ENCODE measurements at regions of chr5 and their contacts with region 1.

Region 1: DNA sequence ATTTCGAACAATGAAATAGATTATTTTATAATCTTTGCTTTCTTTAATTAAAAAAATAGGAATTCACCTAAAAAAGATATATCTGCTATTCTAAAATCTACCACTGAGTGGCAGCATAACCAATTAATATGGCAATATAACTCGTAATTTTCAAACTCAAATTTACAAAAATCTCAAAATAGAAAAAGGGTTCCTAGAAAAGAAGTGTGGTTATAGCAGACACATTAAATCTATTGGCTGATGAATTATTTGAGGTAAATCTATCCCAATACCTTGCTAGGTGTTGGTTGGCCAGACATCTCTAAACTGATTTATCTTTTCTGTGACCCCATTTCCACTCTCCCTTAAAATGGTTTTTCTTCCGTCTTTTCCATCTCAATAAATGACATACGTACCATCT is 30.2 kb upstream of the NRG2 start:
- DNase-seq: no peak
- H3K4me3 ChIP-seq: no peak overlapping the region
- H3K27ac ChIP-seq: no peak overlapping the region
- H3K27me3 ChIP-seq: peaks cover 10% of the 10 kb centered on the region
- CTCF ChIP-seq: peak; percentile 49

Region 2: GRCh38 chr5:140108084-140109017 is 35.1 kb after region 1 on chr5:
- CTCF ChIA-PET with region 1: interaction called, 18 read pairs
- POLR2A ChIA-PET with region 1: no interaction called
- DNase-seq: no peak
- H3K4me3 ChIP-seq: peak overlapping the region; percentile 79
- H3K27ac ChIP-seq: no peak overlapping the region
- H3K27me3 ChIP-seq: peaks cover 14% of the 10 kb centered on the region
- CTCF ChIP-seq: no peak

Region 3: GRCh38 chr5:140157032-140157803 is 83.9 kb after region 1 on chr5:
- CTCF ChIA-PET with region 1: interaction called, 101 read pairs
- POLR2A ChIA-PET with region 1: no interaction called
- DNase-seq: no peak
- H3K4me3 ChIP-seq: peak overlapping the region; percentile 34
- H3K27ac ChIP-seq: no peak overlapping the region
- H3K27me3 ChIP-seq: peaks cover 8% of the 10 kb centered on the region
- CTCF ChIP-seq: peak; percentile 94

Region 4: DNA sequence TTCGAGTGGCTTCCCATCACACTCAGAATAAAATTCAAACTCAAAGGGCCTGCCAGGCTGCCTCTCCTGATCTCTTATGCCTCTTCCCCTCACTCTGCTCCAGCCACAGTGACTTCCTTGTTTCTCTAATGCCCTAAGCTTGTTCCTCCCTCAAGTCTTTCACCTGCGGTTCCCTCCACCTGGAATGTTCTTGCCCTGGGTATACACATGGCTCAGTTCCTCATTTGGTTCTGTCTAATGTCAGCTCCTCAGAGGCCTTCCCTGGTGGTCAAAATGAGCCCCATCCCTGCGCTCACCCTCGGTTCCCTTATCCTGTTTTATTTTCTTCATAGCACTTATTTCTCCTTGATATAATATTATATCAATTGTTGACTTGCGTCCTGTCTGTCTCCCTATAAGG is 89.0 kb after region 1 on chr5:
- CTCF ChIA-PET with region 1: interaction called, 101 read pairs
- POLR2A ChIA-PET with region 1: no interaction called
- DNase-seq: no peak
- H3K4me3 ChIP-seq: no peak overlapping the region
- H3K27ac ChIP-seq: no peak overlapping the region
- H3K27me3 ChIP-seq: peaks cover 3% of the 10 kb centered on the region
- CTCF ChIP-seq: no peak

Region 5: DNA sequence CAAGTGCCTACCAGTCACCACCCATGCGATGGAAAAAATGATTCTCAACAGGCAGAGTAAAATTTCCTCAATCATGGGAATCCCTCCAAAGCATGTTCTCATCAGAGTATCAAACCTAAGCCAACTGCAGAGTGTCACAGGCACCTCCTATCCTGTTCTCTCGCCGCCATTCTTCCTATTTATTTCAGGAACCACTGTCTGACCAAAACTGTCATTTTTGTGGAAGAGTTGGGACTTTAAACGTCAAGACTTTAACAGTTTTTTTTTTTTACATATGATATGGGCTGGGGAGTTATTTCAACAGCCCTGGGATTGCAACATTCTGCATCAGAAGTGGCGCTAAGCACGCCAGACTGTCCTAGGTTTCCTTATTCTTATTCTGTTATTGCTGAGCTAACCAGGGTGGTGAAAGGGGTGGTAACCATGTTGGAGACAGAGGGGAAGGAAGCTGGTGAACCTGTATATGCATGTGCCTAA is 200.1 kb after region 1 on chr5:
- CTCF ChIA-PET with region 1: no interaction called
- POLR2A ChIA-PET with region 1: no interaction called
- DNase-seq: no peak
- H3K4me3 ChIP-seq: no peak overlapping the region
- H3K27ac ChIP-seq: no peak overlapping the region
- H3K27me3 ChIP-seq: no peaks in the 10 kb centered on the region
- CTCF ChIP-seq: no peak

Region 6: DNA sequence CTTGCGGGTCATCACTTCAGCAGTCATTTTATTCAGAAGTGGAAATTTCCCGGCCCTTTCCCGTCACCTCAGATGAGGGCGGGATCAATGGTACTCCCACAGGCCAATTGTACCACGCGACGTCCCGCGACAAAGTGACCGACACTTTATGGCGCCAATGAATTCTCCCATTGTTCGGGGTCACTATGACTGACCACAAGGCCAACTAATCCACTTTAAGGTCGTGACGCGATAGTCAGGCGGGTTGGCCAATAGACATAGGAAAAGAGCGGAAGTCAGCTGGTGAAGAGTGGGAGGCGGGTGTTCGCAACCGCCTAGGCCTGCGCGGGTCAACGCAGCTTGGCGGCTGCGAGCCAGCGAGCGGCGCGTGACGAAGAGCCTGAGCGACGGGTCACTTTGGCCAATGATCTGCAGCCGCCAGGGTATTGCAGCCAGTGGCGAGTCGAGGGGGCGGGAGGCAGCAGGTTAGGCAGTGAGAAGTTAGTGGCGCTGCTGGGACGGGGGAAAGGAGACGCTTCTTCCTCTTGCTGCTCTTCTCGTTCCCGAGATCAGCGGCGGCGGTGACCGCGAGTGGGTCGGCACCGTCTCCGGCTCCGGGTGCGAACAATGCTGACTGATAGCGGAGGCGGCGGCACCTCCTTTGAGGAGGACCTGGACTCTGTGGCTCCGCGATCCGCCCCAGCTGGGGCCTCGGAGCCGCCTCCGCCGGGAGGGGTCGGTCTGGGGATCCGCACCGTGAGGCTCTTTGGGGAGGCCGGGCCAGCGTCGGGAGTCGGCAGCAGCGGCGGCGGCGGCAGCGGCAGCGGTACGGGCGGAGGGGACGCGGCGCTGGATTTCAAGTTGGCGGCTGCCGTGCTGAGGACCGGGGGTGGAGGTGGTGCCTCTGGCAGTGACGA is 328.3 kb after region 1 on chr5 and contains the start of gene ANKHD1:
- CTCF ChIA-PET with region 1: no interaction called
- POLR2A ChIA-PET with region 1: no interaction called
- DNase-seq: peak; percentile 100
- H3K4me3 ChIP-seq: peak within 1 kb of the TSS; percentile 98
- H3K27ac ChIP-seq: peak within 1 kb of the TSS; percentile 90
- H3K27me3 ChIP-seq: no peaks in the 10 kb centered on the region
- CTCF ChIP-seq: no peak
- polyA plus RNA-seq, gene ANKHD1: 54.3 and 56.6 TPM in 2 replicates

Measured in AG04450 (cell line).